Heart left ventricle (tissue), 16 donors: ENCODE measurements at regions of chr13 and their contacts with region 1.

Region 1: DNA sequence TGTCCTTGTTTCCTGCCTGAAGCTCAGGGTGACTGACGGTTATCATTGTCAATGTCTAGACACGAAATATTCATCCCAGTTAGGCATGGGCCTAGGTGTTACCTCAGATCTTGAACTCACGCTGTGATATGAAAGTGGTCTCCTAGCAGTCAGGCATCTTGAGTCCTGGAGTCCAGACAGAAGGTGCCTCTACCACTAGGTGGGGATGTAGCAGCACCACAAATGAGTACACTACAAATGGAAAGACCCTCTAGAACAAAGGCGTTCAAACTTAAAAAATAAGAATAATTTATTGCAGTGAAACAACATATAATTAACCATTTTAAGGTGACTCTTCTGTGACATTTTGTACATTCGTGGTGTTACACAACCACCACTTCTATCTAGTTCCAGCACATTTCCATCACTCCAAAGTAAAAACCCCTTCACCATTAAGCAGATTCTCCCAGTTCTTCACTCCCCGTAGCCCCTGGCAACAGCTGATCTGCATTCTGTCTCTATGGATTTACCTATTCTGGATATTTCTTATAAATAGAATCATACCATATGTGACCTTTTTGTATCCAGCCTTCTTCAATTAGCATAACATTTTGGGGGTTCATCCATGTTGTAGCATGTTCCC is 11.9 kb upstream of the FRY start:
- DNase-seq: peak in 4 of 5 donors; percentile 37 to 55 (median 52)
- ATAC-seq: peak; percentile 42 to 62 (median 50)
- H3K4me3 ChIP-seq: no peak overlapping the region
- H3K27ac ChIP-seq: no peak overlapping the region
- H3K4me1 ChIP-seq: peaks cover 3 to 38% (median 19%) of the 10 kb centered on the region in 12 donors
- H3K27me3 ChIP-seq: no peaks in the 10 kb centered on the region
- CTCF ChIP-seq: peak; percentile 46 to 85 (median 71)
- POLR2A ChIP-seq: no peak

Region 2: GRCh38 chr13:31835932-31836331 is 183.8 kb before region 1 on chr13:
- intact Hi-C with region 1: loop called in 1 of 10 experiments (anchors 10 kb)
- DNase-seq: no peak
- ATAC-seq: peak in 1 of 4 donors; percentile 41
- H3K4me3 ChIP-seq: no peak overlapping the region
- H3K27ac ChIP-seq: no peak overlapping the region
- H3K4me1 ChIP-seq: no peaks in the 10 kb centered on the region
- H3K27me3 ChIP-seq: no peaks in the 10 kb centered on the region
- CTCF ChIP-seq: no peak
- POLR2A ChIP-seq: no peak

Region 3: GRCh38 chr13:32060401-32060878 is 40.7 kb after region 1 on chr13:
- intact Hi-C with region 1: loop called in 1 of 10 experiments (anchors 1 kb)
- DNase-seq: peak in 3 of 5 donors; percentile 27 to 42 (median 36)
- ATAC-seq: peak; percentile 93 to 96 (median 94)
- H3K4me3 ChIP-seq: peak overlapping the region in 8 of 12 donors; percentile 5 to 51 (median 28)
- H3K27ac ChIP-seq: peak overlapping the region; percentile 35 to 82 (median 76)
- H3K4me1 ChIP-seq: peaks cover 0 to 55% (median 25%) of the 10 kb centered on the region in 12 donors
- H3K27me3 ChIP-seq: no peaks in the 10 kb centered on the region
- CTCF ChIP-seq: no peak
- POLR2A ChIP-seq: no peak

Region 4: DNA sequence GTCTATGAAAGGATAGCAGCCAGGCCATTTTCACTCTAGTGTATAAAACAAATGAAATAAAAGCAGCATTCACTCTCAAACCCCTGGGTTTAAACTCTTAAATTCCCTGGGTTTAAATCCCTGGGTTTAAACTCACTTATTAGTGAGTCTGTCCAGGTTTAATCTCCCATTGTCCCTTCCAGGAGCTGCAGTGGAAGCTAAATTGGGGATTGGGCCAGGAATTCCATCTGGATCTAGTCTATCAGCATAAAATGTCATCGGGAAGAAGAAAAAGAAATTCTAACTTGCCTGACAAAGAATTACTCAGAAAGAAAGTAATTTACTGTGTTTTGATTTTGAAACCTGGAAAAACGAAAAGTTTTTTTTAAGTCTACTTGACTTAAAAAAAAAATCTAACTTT is 66.6 kb after region 1 on chr13:
- intact Hi-C with region 1: no loop called
- DNase-seq: no peak
- ATAC-seq: peak in 1 of 4 donors; percentile 46
- H3K4me3 ChIP-seq: no peak overlapping the region
- H3K27ac ChIP-seq: peak overlapping the region in 7 of 12 donors; percentile 4 to 41 (median 17)
- H3K4me1 ChIP-seq: peaks cover 0 to 64% (median 18%) of the 10 kb centered on the region in 12 donors
- H3K27me3 ChIP-seq: no peaks in the 10 kb centered on the region
- CTCF ChIP-seq: no peak
- POLR2A ChIP-seq: no peak

Region 5: DNA sequence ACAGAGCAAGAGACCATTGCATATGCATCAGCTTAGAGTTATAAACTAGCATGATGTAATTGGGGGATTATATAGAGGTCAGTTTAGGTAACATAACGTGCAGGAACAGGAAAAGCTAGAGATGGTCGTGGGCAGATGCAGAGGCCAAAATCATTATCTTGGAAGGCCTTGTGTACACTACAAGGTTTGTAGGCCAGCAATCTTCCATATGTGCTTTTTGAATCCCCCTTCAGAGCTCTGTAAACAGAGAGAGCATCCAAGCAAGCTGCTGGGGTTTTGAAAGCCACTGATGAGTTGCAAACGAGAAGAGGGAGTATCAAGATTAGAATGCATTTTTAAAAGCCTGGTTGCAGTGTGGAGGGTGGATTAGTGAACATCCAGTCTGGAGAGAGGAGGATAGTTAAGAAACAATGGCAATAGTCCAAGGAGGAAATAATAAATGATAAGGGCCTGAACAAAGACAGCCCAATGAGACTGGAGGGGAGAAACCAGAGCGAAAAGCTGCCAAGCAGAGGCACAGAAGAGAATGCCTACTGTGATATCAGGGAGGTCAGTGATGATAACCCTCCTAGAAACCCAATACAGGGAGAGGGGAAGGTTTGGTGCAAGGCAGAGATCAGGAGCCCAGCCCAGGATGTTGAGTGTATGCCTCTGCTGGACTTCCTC is 185.8 kb after region 1 on chr13:
- intact Hi-C with region 1: loop called in 2 of 10 experiments (anchors 10 kb)
- DNase-seq: no peak
- ATAC-seq: peak in 1 of 4 donors; percentile 21
- H3K4me3 ChIP-seq: no peak overlapping the region
- H3K27ac ChIP-seq: peak overlapping the region in 9 of 12 donors; percentile 1 to 70 (median 33)
- H3K4me1 ChIP-seq: peaks cover 3 to 72% (median 20%) of the 10 kb centered on the region in 12 donors
- H3K27me3 ChIP-seq: no peaks in the 10 kb centered on the region
- CTCF ChIP-seq: no peak
- POLR2A ChIP-seq: no peak

Region 6: DNA sequence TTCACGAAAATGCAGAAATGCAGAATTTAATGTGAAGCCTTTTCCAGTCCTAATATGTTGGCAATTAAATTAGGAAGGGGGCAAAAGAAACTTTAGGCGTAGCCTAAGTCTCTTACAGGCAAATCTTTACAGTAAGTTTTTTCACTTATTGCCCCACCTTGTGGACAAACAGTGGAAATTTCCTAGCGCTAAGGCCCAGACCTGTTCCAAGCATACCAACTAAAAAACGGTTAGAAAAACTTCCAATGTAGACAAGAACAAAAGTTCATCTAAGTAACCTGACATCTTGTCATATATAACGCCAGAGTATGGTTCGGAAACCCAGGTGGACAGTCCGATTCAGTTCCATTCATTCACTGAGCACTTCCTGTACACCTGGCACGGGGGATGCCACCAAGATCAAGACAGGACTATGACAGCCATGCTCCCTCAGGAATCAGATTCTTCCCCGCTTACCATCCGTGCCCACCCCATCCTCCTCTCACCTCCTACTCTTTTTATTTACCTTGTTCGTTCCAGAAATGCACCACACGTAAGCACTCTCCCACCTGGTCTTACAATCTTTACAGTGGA is 290.5 kb after region 1 on chr13:
- intact Hi-C with region 1: loop called in 9 of 10 experiments (anchors 2 to 10 kb)
- DNase-seq: no peak
- ATAC-seq: peak; percentile 24 to 78 (median 74)
- H3K4me3 ChIP-seq: peak overlapping the region in 8 of 12 donors; percentile 2 to 41 (median 24)
- H3K27ac ChIP-seq: peak overlapping the region in 3 of 12 donors; percentile 5 to 36 (median 15)
- H3K4me1 ChIP-seq: peaks cover 0 to 18% (median 4%) of the 10 kb centered on the region in 12 donors
- H3K27me3 ChIP-seq: no peaks in the 10 kb centered on the region
- CTCF ChIP-seq: peak; percentile 69 to 87 (median 74)
- POLR2A ChIP-seq: no peak

Region 7: DNA sequence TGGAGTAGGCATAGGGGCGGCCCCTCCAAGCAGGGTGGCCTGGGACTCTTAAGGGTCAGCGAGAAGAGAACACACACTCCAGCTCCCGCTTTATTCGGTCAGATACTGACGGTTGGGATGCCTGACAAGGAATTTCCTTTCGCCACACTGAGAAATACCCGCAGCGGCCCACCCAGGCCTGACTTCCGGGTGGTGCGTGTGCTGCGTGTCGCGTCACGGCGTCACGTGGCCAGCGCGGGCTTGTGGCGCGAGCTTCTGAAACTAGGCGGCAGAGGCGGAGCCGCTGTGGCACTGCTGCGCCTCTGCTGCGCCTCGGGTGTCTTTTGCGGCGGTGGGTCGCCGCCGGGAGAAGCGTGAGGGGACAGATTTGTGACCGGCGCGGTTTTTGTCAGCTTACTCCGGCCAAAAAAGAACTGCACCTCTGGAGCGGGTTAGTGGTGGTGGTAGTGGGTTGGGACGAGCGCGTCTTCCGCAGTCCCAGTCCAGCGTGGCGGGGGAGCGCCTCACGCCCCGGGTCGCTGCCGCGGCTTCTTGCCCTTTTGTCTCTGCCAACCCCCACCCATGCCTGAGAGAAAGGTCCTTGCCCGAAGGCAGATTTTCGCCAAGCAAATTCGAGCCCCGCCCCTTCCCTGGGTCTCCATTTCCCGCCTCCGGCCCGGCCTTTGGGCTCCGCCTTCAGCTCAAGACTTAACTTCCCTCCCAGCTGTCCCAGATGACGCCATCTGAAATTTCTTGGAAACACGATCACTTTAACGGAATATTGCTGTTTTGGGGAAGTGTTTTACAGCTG is 295.7 kb after region 1 on chr13 and contains the starts of genes BRCA2 and ZAR1L:
- intact Hi-C with region 1: loop called in 6 of 10 experiments (anchors 2 to 10 kb)
- DNase-seq: peak; percentile 90 to 94 (median 91)
- ATAC-seq: peak; percentile 92 to 98 (median 98)
- H3K4me3 ChIP-seq: peak within 1 kb of the TSS; percentile 43 to 91 (median 79)
- H3K27ac ChIP-seq: peak within 1 kb of the TSS; percentile 74 to 99 (median 92)
- H3K4me1 ChIP-seq: peaks cover 0 to 29% (median 5%) of the 10 kb centered on the region in 12 donors
- H3K27me3 ChIP-seq: no peaks in the 10 kb centered on the region
- CTCF ChIP-seq: peak in 3 of 12 donors; percentile 13 to 18 (median 14)
- POLR2A ChIP-seq: peak in 1 of 2 donors; percentile 77
- total RNA-seq, gene BRCA2: 0.13 to 5.2 (median 0.42) TPM
- total RNA-seq, gene ZAR1L: not detected